Right lobe of liver (tissue), 6 donors: ENCODE measurements at regions of chr12 and their contacts with region 1.

Region 1: GRCh38 chr12:93979189-93979588 is 169.2 kb upstream of the PLXNC1 start:
- DNase-seq: no peak
- ATAC-seq: peak; percentile 77 to 88 (median 82)
- H3K4me3 ChIP-seq: no peak overlapping the region
- H3K27ac ChIP-seq: no peak overlapping the region
- H3K4me1 ChIP-seq: no peaks in the 10 kb centered on the region
- H3K27me3 ChIP-seq: no peaks in the 10 kb centered on the region
- CTCF ChIP-seq: peak; percentile 61 to 66 (median 64)
- POLR2A ChIP-seq: no peak

Region 2: DNA sequence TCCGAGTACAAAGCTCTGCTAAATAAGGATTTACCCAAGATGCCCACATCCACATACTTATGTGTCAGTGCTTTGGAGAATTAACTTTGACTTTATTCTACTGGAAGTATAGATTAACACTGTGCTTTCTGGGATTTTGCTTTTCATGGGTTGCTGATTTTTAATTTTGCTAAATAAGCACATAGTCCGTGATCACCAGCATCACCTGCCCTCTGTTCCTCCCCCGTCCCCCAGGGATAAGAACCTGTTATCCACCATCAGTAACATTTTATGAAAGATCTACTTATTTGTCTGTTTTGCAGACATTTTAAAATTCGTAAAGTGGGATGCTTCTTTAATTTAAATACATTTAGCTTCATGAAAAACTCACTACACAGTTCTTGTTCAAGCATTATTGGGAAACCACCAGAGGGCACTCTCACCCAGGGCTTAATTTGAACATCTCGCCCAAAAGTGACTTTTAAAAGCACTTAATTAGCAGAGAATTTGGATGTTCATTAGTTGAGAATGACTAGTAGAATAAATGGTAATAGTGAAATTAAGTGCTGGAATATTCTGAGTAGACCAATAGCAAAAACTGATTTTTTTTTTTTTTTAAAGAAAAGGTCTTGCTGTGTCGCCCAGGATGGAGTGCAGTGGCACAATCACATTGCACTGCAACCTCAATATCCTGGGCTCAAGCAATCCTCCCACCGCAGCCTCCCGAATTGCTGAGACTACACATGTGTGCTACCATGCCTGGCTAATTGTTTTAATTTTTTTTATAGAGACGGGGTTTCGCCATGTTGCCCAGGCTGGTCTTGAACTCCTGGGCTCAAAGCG is 476.2 kb before region 1 on chr12:
- intact Hi-C with region 1: loop called in 1 of 2 experiments (anchors 10 kb)
- DNase-seq: no peak
- ATAC-seq: peak; percentile 51 to 64 (median 59)
- H3K4me3 ChIP-seq: no peak overlapping the region
- H3K27ac ChIP-seq: no peak overlapping the region
- H3K4me1 ChIP-seq: no peaks in the 10 kb centered on the region
- H3K27me3 ChIP-seq: no peaks in the 10 kb centered on the region
- CTCF ChIP-seq: peak; percentile 74 to 86 (median 79)
- POLR2A ChIP-seq: no peak